ENCODE measurements at regions of chr11 and their contacts with region 1.

Region 1: GRCh38 chr11:69654569-69655327 is 13.8 kb downstream of the CCND1 start:
- DNase-seq: no peak
- H3K4me3 ChIP-seq: no peak overlapping the region
- H3K27ac ChIP-seq: no peak overlapping the region
- H3K4me1 ChIP-seq: peaks cover 3% of the 10 kb centered on the region
- H3K27me3 ChIP-seq: no peaks in the 10 kb centered on the region
- CTCF ChIP-seq: no peak
- POLR2A ChIP-seq: no peak

Region 2: GRCh38 chr11:69101115-69101791 is 553.5 kb before region 1 on chr11:
- CTCF ChIA-PET with region 1: interaction called, 10 read pairs
- POLR2A ChIA-PET with region 1: no interaction called
- dilution Hi-C with region 1: loop called (anchors 25 kb)
- intact Hi-C with region 1: loop called (anchors 5 kb)
- DNase-seq: peak; percentile 71
- H3K4me3 ChIP-seq: no peak overlapping the region
- H3K27ac ChIP-seq: no peak overlapping the region
- H3K4me1 ChIP-seq: peaks cover 5% of the 10 kb centered on the region
- H3K27me3 ChIP-seq: peaks cover 0 to 2% of the 10 kb centered on the region in 2 experiments
- CTCF ChIP-seq: peak; percentile 98 to 99
- POLR2A ChIP-seq: peak; percentile 37

Region 3: DNA sequence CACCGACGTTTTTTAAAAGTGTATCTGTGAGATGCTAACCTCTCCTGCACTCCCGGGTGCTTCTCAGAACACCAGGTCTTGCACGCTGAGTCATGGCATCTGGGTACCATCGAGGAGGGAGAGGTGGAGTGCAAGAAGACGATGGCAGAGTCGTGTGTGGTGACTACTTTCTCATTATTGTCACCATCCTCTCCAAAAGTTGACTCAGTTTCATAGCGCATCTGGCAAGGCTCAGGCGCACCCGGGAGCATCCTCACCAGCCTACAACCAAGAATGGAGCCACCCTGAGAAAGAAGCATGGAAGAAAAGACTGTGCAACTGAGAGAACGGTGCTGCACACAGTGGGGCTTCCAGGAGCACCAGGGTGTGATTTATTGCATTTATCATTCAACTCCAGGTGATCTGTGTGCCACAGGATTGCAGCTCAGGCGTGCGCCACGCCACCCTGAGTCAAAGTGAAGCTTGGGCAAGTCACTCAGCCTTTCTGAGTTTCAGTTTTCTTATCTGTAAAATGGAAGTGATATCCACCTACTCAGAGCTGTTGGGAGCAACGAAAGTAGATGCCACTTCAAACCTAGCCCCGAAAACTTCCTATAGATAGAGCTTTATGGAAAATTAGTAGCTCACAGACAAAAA is 107.9 kb before region 1 on chr11:
- CTCF ChIA-PET with region 1: no interaction called
- POLR2A ChIA-PET with region 1: no interaction called
- dilution Hi-C with region 1: no loop called
- intact Hi-C with region 1: no loop called
- DNase-seq: no peak
- H3K4me3 ChIP-seq: no peak overlapping the region
- H3K27ac ChIP-seq: no peak overlapping the region
- H3K4me1 ChIP-seq: no peaks in the 10 kb centered on the region
- H3K27me3 ChIP-seq: peaks cover 5 to 7% of the 10 kb centered on the region in 2 experiments
- CTCF ChIP-seq: no peak
- POLR2A ChIP-seq: no peak

Region 4: GRCh38 chr11:69711822-69712801 is 57.4 kb after region 1 on chr11:
- CTCF ChIA-PET with region 1: no interaction called
- POLR2A ChIA-PET with region 1: no interaction called
- dilution Hi-C with region 1: no loop called
- intact Hi-C with region 1: no loop called
- DNase-seq: no peak
- H3K4me3 ChIP-seq: no peak overlapping the region
- H3K27ac ChIP-seq: no peak overlapping the region
- H3K4me1 ChIP-seq: no peaks in the 10 kb centered on the region
- H3K27me3 ChIP-seq: peaks cover 3 to 6% of the 10 kb centered on the region in 2 experiments
- CTCF ChIP-seq: no peak
- POLR2A ChIP-seq: no peak

Measured in endothelial cell of umbilical vein (primary cell).